ENCODE measurements at regions of chr16 and their contacts with region 1.

Region 1: DNA sequence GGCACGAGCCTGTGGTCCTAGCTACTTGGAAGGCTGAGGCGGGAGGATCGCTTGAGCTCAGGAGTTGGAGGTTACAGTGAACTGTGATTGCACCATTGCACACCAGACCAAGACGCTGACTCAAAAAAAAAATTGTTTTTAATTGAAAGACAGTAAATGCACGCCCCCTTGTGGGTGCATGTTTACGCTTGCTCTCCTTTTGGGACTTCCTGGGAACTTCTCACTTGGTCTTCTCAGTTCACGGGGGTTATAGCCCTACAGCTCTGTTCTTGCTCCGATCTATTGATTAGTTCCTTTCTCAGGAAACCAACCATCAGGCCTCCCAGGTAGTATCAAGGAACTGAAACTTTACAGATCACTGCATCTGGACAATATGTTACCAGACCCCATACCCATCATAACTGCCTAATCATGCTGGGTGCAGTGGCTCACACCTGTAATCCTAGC is 14.2 kb upstream of the RIPOR1 start:
- DNase-seq: peak; percentile 96
- ATAC-seq: peak; percentile 92
- H3K4me3 Mint-ChIP-seq: no peak overlapping the region
- H3K27ac Mint-ChIP-seq: no peak overlapping the region
- H3K4me1 Mint-ChIP-seq: peaks cover 9% of the 10 kb centered on the region
- H3K27me3 Mint-ChIP-seq: no peaks in the 10 kb centered on the region
- CTCF ChIP-seq: peak; percentile 78

Region 2: DNA sequence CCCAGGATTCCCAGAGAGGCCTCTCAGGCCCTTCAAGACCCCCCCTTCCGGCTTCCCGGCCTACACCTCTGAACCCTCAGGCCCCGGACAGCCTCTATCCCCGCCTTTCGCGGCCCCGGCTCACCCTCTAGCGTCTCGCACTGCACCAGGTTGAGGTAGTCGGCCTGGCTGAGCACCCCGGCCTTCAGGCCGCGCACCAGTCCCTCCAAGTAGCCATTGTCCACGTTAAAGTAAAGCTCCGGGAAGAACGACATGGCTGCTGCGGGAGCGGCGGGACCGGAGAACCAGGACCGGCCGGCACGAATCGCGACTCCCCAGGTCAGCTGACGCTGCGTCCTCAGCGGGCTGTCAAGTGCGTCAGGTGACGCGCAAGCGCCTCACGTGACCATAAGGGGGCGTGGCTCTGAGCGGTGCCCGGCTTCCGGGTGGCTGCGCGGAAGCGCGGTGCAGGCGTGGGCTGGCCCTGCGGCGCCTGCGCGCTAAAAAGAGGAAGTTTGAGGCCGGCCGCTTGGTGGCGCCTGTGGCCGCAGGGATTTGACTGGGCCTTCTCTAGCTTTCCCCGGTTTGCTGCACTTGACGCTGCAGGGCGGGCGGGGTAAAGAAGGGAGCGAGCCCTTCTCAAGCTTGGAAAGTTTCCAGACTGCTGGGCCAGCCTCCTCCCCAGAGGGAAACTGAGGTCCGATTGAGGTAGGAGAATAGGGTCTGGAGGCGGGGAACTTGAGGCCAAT is 33.4 kb before region 1 on chr16 and contains the start of gene ATP6V0D1:
- CTCF ChIA-PET with region 1: interaction called, 45 read pairs
- POLR2A ChIA-PET with region 1: interaction called, 9 read pairs
- intact Hi-C with region 1: no loop called
- DNase-seq: peak; percentile 99
- ATAC-seq: peak; percentile 92
- H3K4me3 Mint-ChIP-seq: peak within 1 kb of the TSS; percentile 93
- H3K27ac Mint-ChIP-seq: peak within 1 kb of the TSS; percentile 99
- H3K4me1 Mint-ChIP-seq: peaks cover 30% of the 10 kb centered on the region
- H3K27me3 Mint-ChIP-seq: no peaks in the 10 kb centered on the region
- CTCF ChIP-seq: peak; percentile 75
- total RNA-seq, gene ATP6V0D1: 17.5 to 18.2 TPM

Region 3: GRCh38 chr16:67490335-67491096 is 23.9 kb before region 1 on chr16:
- CTCF ChIA-PET with region 1: interaction called, 142 read pairs
- POLR2A ChIA-PET with region 1: interaction called, 7 read pairs
- intact Hi-C with region 1: loop called (anchors 2 kb)
- DNase-seq: no peak
- ATAC-seq: no peak
- H3K4me3 Mint-ChIP-seq: no peak overlapping the region
- H3K27ac Mint-ChIP-seq: no peak overlapping the region
- H3K4me1 Mint-ChIP-seq: peaks cover 5% of the 10 kb centered on the region
- H3K27me3 Mint-ChIP-seq: no peaks in the 10 kb centered on the region
- CTCF ChIP-seq: no peak

Region 4: DNA sequence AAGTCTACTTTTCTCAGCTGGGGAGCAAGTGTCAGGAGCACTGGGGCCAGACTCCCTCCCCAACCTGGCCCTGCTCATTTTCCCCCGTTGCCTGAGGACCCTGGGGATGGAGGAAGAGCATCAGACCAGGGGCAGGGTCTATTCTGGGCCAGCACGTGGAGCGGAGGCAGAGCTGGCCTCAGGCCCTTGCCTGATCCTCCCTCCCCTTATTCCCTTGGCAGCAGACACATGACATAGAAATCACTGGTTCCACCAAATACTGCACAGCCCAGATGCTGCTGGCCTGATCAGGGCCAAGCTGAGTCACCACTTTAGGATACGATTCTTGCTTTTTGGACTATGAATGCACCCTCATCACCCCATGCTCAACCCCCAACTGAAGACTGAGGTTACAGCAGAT is 15.3 kb before region 1 on chr16:
- CTCF ChIA-PET with region 1: interaction called, 142 read pairs
- POLR2A ChIA-PET with region 1: interaction called, 7 read pairs
- intact Hi-C with region 1: loop called (anchors 2 kb)
- DNase-seq: no peak
- ATAC-seq: no peak
- H3K4me3 Mint-ChIP-seq: no peak overlapping the region
- H3K27ac Mint-ChIP-seq: no peak overlapping the region
- H3K4me1 Mint-ChIP-seq: peaks cover 10% of the 10 kb centered on the region
- H3K27me3 Mint-ChIP-seq: no peaks in the 10 kb centered on the region
- CTCF ChIP-seq: no peak

Region 5: GRCh38 chr16:67667817-67668494 is 153.6 kb after region 1 on chr16:
- CTCF ChIA-PET with region 1: interaction called, 154 read pairs
- POLR2A ChIA-PET with region 1: interaction called, 3 read pairs
- intact Hi-C with region 1: no loop called
- DNase-seq: peak; percentile 92
- ATAC-seq: peak; percentile 92
- H3K4me3 Mint-ChIP-seq: peak overlapping the region; percentile 80
- H3K27ac Mint-ChIP-seq: no peak overlapping the region
- H3K4me1 Mint-ChIP-seq: peaks cover 11% of the 10 kb centered on the region
- H3K27me3 Mint-ChIP-seq: no peaks in the 10 kb centered on the region
- CTCF ChIP-seq: peak; percentile 73

Measured in activated CD8-positive, alpha-beta T cell treated with anti-CD3 and anti-CD28 coated beads for 36 hours (primary cell).